ENCODE measurements at regions of chr1 and their contacts with region 1.

Region 1: GRCh38 chr1:119968068-119968492 is 71.8 kb upstream of the ADAM30 start:
- DNase-seq: peak; percentile 90
- ATAC-seq: peak; percentile 99
- H3K4me3 Mint-ChIP-seq: no peak overlapping the region
- H3K27ac Mint-ChIP-seq: no peak overlapping the region
- H3K4me1 Mint-ChIP-seq: peaks cover 4% of the 10 kb centered on the region
- H3K27me3 Mint-ChIP-seq: no peaks in the 10 kb centered on the region
- CTCF ChIP-seq: peak; percentile 75

Region 2: DNA sequence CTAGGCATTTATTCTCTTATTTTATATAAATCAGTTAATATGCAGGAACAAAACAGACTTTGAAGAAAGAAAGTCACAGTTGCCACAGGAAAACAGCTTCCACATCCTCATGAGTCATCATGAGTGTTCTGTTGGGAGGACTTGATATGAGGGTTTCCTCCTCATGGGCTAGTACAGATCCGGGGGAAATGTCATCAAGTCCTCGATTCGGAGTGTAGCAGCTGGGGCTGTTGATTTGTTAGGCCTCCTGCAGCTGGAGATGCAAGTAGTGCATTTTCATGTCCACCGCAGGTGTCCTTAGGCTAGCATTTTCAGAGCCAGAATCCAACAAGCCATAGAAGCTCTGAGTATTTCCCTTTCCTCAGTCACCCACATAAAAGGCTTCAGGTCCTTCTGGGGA is 108.4 kb before region 1 on chr1:
- CTCF ChIA-PET with region 1: no interaction called
- POLR2A ChIA-PET with region 1: no interaction called
- intact Hi-C with region 1: no loop called
- DNase-seq: peak; percentile 23
- ATAC-seq: peak; percentile 79
- H3K4me3 Mint-ChIP-seq: no peak overlapping the region
- H3K27ac Mint-ChIP-seq: peak overlapping the region; percentile 32
- H3K4me1 Mint-ChIP-seq: peaks cover 12% of the 10 kb centered on the region
- H3K27me3 Mint-ChIP-seq: peaks cover 3% of the 10 kb centered on the region
- CTCF ChIP-seq: no peak

Region 3: DNA sequence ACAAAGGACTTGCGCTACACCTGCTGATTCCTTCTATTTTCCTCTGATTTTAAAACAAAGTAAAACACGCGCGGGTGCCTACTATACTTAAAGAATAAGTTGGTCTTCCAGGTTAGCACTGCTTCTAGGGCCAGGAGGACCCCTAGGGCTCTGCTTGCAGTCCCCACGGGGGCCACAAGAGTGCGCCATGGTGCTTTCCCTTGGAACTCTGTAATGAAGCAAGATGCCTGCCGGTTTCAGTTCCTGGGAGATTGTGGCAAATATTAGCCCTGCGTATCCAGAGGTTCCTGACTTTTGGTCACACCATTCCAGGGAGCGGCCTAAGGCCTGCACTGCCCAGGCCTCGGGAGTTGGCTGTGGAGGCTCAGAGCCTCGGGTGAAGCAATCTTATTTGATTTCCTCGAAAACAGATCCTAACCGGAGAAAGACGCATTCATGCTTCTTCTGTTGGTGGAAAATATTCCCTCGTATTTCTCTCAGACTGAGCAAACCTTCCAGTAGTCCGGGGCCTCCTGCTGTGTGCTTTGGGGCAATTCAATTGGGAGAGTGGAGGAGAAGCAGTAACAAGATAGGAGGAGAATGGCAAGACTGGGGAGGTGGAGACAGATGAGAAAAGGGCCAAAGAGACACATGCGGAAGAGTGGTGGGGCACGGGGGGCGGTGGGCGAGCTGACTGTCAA is 97.0 kb before region 1 on chr1:
- CTCF ChIA-PET with region 1: interaction called, 7 read pairs
- POLR2A ChIA-PET with region 1: no interaction called
- intact Hi-C with region 1: loop called (anchors 2 kb)
- DNase-seq: peak; percentile 84
- ATAC-seq: peak; percentile 81
- H3K4me3 Mint-ChIP-seq: no peak overlapping the region
- H3K27ac Mint-ChIP-seq: no peak overlapping the region
- H3K4me1 Mint-ChIP-seq: peaks cover 3% of the 10 kb centered on the region
- H3K27me3 Mint-ChIP-seq: peaks cover 9% of the 10 kb centered on the region
- CTCF ChIP-seq: peak; percentile 92

Region 4: GRCh38 chr1:119895986-119896702 is 71.9 kb before region 1 on chr1 and contains the start of gene ADAM30:
- CTCF ChIA-PET with region 1: no interaction called
- POLR2A ChIA-PET with region 1: no interaction called
- intact Hi-C with region 1: no loop called
- DNase-seq: no peak
- ATAC-seq: no peak
- H3K4me3 Mint-ChIP-seq: no peak within 1 kb of the TSS
- H3K27ac Mint-ChIP-seq: no peak within 1 kb of the TSS
- H3K4me1 Mint-ChIP-seq: peaks cover 12% of the 10 kb centered on the region
- H3K27me3 Mint-ChIP-seq: peaks cover 19% of the 10 kb centered on the region
- CTCF ChIP-seq: no peak
- total RNA-seq, gene ADAM30: not detected

Region 5: GRCh38 chr1:119948342-119949214 is 19.5 kb before region 1 on chr1:
- CTCF ChIA-PET with region 1: interaction called, 93 read pairs
- POLR2A ChIA-PET with region 1: no interaction called
- intact Hi-C with region 1: no loop called
- DNase-seq: peak; percentile 89
- ATAC-seq: peak; percentile 72
- H3K4me3 Mint-ChIP-seq: no peak overlapping the region
- H3K27ac Mint-ChIP-seq: no peak overlapping the region
- H3K4me1 Mint-ChIP-seq: no peaks in the 10 kb centered on the region
- H3K27me3 Mint-ChIP-seq: no peaks in the 10 kb centered on the region
- CTCF ChIP-seq: peak; percentile 68

Region 6: GRCh38 chr1:119987112-119987511 is 19.0 kb after region 1 on chr1:
- CTCF ChIA-PET with region 1: interaction called, 34 read pairs
- POLR2A ChIA-PET with region 1: no interaction called
- intact Hi-C with region 1: no loop called
- DNase-seq: peak; percentile 26
- ATAC-seq: peak; percentile 77
- H3K4me3 Mint-ChIP-seq: no peak overlapping the region
- H3K27ac Mint-ChIP-seq: peak overlapping the region; percentile 84
- H3K4me1 Mint-ChIP-seq: peaks cover 36% of the 10 kb centered on the region
- H3K27me3 Mint-ChIP-seq: no peaks in the 10 kb centered on the region
- CTCF ChIP-seq: no peak

Measured in activated CD8-positive, alpha-beta T cell treated with anti-CD3 and anti-CD28 coated beads for 36 hours (primary cell).